ENCODE measurements at regions of chr4 and their contacts with region 1.

Region 1: DNA sequence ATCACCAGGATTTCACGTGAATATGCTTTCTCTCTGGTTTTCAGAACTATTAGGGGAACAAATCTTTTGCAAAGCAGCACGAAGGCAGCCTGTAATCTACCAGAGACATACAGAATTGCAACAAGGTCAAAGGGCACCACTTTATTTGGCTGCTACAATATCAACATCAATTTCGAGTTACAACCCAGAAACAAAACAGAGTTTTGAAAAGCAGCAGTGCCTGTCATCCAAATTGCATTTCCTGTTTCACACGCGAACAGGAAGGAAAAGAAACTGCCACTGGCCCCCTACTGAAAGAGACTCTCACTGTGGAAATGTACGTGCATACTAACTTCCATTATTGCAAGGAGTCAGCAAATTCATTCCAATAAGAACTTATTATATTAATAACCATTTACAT is 17.1 kb upstream of the C1QTNF7 start:
- DNase-seq: peak; percentile 52
- H3K4me3 Mint-ChIP-seq: peak overlapping the region; percentile 29
- H3K27ac Mint-ChIP-seq: peak overlapping the region; percentile 68
- H3K4me1 Mint-ChIP-seq: peaks cover 40% of the 10 kb centered on the region
- H3K27me3 Mint-ChIP-seq: no peaks in the 10 kb centered on the region

Region 2: DNA sequence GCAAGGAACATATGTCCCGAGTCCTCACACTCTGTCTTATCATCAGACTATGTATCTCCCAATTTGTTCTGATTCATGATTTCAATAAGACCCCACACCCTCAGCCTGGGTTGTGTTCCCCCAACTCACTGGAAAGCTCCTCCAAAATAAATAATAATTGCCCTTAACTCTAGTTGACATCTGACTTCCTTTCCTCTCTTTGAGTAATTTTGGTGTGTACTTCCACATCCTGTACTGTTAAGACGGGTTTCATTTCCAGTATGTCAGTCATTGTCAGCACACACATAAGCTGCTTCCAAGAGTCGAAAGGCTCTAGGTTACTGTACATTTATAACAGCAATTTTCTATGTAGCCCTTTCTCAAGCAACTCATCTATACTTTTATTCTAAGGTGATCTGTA is 35.1 kb before region 1 on chr4:
- CTCF ChIA-PET with region 1: no interaction called
- intact Hi-C with region 1: loop called (anchors 1 kb)
- DNase-seq: no peak
- H3K4me3 Mint-ChIP-seq: no peak overlapping the region
- H3K27ac Mint-ChIP-seq: peak overlapping the region; percentile 12
- H3K4me1 Mint-ChIP-seq: peaks cover 26% of the 10 kb centered on the region
- H3K27me3 Mint-ChIP-seq: no peaks in the 10 kb centered on the region

Region 3: GRCh38 chr4:15423285-15423711 is 12.5 kb after region 1 on chr4:
- CTCF ChIA-PET with region 1: no interaction called
- intact Hi-C with region 1: loop called (anchors 1 kb)
- DNase-seq: peak; percentile 59
- H3K4me3 Mint-ChIP-seq: no peak overlapping the region
- H3K27ac Mint-ChIP-seq: peak overlapping the region; percentile 20
- H3K4me1 Mint-ChIP-seq: peaks cover 33% of the 10 kb centered on the region
- H3K27me3 Mint-ChIP-seq: no peaks in the 10 kb centered on the region

Region 4: DNA sequence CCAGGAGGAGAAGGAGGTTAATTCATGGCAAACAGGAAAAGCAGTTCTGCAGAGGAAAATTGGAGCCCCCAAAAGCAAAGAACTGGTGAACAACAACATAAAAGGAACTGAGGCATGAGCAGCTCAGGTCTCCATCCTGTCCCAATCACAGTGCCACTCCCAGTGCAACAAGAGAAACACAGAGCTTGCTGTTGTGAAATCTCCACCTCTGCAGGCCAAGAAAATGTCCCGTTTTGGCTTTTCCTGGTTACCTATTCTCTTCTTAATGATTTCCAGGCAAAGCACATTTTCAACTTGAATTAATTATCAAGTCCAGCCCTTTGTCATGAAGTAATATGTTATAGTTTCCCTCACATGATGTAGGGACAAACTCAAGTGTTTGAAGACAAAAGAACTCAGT is 17.9 kb after region 1 on chr4:
- CTCF ChIA-PET with region 1: no interaction called
- intact Hi-C with region 1: loop called (anchors 1 kb)
- DNase-seq: no peak
- H3K4me3 Mint-ChIP-seq: no peak overlapping the region
- H3K27ac Mint-ChIP-seq: no peak overlapping the region
- H3K4me1 Mint-ChIP-seq: peaks cover 25% of the 10 kb centered on the region
- H3K27me3 Mint-ChIP-seq: no peaks in the 10 kb centered on the region

Measured in activated naive CD4-positive, alpha-beta T cell treated with anti-CD3 and anti-CD28 coated beads for 36 hours (primary cell).